ENCODE measurements at regions of chr9 and their contacts with region 1.

Region 1: GRCh38 chr9:135186248-135187164 is 99.0 kb downstream of the OLFM1 start:
- DNase-seq: no peak
- H3K4me3 ChIP-seq: no peak overlapping the region
- H3K27ac ChIP-seq: no peak overlapping the region
- H3K4me1 ChIP-seq: no peaks in the 10 kb centered on the region
- H3K27me3 ChIP-seq: peaks cover 3% of the 10 kb centered on the region
- CTCF ChIP-seq: no peak
- EP300 ChIP-seq: no peak
- POLR2A ChIP-seq: no peak

Region 2: GRCh38 chr9:134419684-134420076 is 766.8 kb before region 1 on chr9:
- in situ Hi-C with region 1: no loop called
- intact Hi-C with region 1: loop called (anchors 5 kb)
- DNase-seq: no peak
- H3K4me3 ChIP-seq: no peak overlapping the region
- H3K27ac ChIP-seq: no peak overlapping the region
- H3K4me1 ChIP-seq: peaks cover 19 to 27% (median 23%) of the 10 kb centered on the region in 4 donors
- H3K27me3 ChIP-seq: no peaks in the 10 kb centered on the region
- CTCF ChIP-seq: peak; percentile 16 to 38 (median 26)
- EP300 ChIP-seq: no peak
- POLR2A ChIP-seq: no peak

Region 3: GRCh38 chr9:134475011-134475790 is 711.3 kb before region 1 on chr9:
- in situ Hi-C with region 1: no loop called
- intact Hi-C with region 1: no loop called
- DNase-seq: peak; percentile 63
- H3K4me3 ChIP-seq: no peak overlapping the region
- H3K27ac ChIP-seq: peak overlapping the region; percentile 12 to 64 (median 34)
- H3K4me1 ChIP-seq: peaks cover 8 to 16% (median 9%) of the 10 kb centered on the region in 4 donors
- H3K27me3 ChIP-seq: no peaks in the 10 kb centered on the region
- CTCF ChIP-seq: no peak
- EP300 ChIP-seq: no peak
- POLR2A ChIP-seq: no peak

Region 4: DNA sequence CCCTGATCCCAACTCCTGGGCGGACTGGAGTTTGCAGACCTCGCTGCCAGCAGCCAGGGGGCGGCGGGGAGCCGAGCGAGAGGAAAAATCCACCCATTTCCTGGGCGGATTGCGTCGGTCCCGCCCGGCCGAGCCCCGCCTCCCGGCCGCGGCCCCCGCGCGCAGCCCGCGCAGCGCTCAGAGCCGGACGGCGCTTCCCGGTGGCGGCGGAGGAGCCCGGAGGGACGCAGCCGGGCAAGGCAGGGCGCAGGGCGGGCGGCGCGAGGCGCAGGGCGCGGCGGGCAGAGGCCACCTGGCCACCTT is 99.1 kb before region 1 on chr9 and contains the start of gene OLFM1:
- in situ Hi-C with region 1: no loop called
- intact Hi-C with region 1: no loop called
- DNase-seq: peak; percentile 68
- H3K4me3 ChIP-seq: peak within 1 kb of the TSS; percentile 8 to 47 (median 34)
- H3K27ac ChIP-seq: peak within 1 kb of the TSS in 1 of 4 donors; percentile 21
- H3K4me1 ChIP-seq: peaks cover 10 to 33% (median 16%) of the 10 kb centered on the region in 4 donors
- H3K27me3 ChIP-seq: peaks cover 34% of the 10 kb centered on the region
- CTCF ChIP-seq: peak in 4 of 5 experiments; percentile 44 to 58 (median 52)
- EP300 ChIP-seq: no peak
- POLR2A ChIP-seq: no peak
- total RNA-seq, gene OLFM1: 3.7 to 7.8 (median 4.0) TPM in 3 of 4 donors, not detected in the other

Region 5: DNA sequence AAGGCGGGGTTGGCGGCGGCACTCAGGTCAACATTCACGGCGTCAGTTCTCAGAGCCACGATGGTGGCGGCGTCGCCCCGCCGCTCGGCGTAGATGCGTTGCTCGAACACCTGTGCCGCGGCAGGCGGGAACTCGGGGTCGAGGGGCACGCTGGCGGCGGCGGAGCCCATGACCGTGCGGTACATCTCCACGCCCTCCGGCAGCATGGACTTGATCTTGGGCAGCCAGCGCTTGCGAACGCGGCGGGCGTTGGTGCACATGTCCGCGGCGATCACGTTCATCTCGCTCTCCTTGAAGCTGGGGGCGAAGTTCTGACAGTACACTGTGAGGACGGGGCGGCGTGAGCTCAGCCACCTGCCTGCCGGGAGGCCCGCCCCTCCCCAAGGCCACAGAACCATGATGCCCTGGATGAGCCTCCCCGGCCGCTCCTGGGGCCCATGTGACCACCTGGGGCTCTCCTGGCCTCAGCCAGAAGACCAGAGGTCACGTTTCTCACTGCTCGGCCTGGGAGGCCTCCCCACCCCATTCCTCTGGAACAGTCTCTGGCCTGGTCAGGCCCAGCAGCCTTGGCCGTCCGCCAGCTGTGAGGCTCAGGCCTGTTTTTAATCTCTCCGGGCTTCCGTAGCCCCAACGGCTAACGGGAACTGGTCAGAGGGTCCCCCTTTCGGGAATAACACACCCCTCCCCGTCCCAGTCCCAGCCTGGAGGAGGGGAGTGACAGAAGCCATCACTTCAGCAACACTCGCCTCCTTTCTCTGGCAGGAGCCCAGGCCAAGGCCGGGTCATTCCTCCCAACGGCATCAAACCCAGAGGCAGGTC is 825.4 kb after region 1 on chr9:
- in situ Hi-C with region 1: no loop called
- intact Hi-C with region 1: no loop called
- DNase-seq: peak; percentile 60
- H3K4me3 ChIP-seq: peak overlapping the region in 1 of 4 donors; percentile 20
- H3K27ac ChIP-seq: peak overlapping the region; percentile 51 to 73 (median 64)
- H3K4me1 ChIP-seq: peaks cover 9 to 26% (median 18%) of the 10 kb centered on the region in 4 donors
- H3K27me3 ChIP-seq: no peaks in the 10 kb centered on the region
- CTCF ChIP-seq: no peak
- EP300 ChIP-seq: no peak
- POLR2A ChIP-seq: no peak

Measured in transverse colon (tissue), 4 donors.